ENCODE measurements at regions of chr4 and their contacts with region 1.

Region 1: GRCh38 chr4:139416073-139416673 is 37.7 kb upstream of the RAB33B start:
- DNase-seq: peak; percentile 58
- H3K4me3 ChIP-seq: no peak overlapping the region
- H3K27ac ChIP-seq: no peak overlapping the region
- H3K4me1 ChIP-seq: peaks cover 40% of the 10 kb centered on the region
- H3K27me3 ChIP-seq: no peaks in the 10 kb centered on the region
- CTCF ChIP-seq: peak; percentile 35 to 42
- POLR2A ChIP-seq: no peak

Region 2: DNA sequence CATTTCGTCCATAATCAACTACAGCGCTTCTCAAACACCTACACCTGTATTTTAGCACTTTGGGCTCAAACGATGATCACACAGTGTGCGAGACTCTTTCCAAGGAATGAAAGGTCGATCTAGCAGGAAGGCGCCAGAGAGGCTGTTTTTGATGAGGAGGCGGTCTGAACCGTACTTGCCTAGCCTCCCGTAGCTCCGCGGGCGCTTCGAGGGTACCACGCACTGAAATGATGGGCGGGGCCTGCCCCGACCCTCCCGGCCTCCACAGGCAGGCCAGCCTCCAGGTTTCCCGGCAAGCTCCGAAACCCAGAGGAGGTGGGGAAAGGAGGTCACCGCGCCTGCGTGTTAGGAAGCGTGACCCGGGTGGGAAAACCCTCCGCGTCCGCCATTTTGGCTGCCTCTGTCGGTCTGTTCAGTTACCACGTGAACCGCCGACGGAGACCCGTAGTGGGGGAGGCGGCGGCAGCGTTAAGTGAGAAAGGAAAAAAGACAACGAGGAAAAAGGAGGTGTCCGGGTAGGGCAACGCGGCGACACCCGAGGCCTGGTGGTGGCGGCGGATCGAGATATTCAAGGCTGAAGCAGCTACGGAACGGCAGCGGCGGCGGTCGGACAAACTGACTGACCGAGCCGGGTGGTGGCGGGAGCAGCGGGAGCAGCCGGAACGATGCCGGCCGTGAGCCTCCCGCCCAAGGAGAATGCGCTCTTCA is 114.9 kb before region 1 on chr4 and contains the start of gene NAA15:
- CTCF ChIA-PET with region 1: interaction called, 4 read pairs
- POLR2A ChIA-PET with region 1: no interaction called
- dilution Hi-C with region 1: no loop called
- intact Hi-C with region 1: loop called (anchors 1 kb)
- DNase-seq: peak; percentile 99
- H3K4me3 ChIP-seq: peak within 1 kb of the TSS; percentile 69 to 99 (median 85)
- H3K27ac ChIP-seq: peak within 1 kb of the TSS; percentile 88
- H3K4me1 ChIP-seq: peaks cover 20% of the 10 kb centered on the region
- H3K27me3 ChIP-seq: no peaks in the 10 kb centered on the region
- CTCF ChIP-seq: no peak
- POLR2A ChIP-seq: peak; percentile 28
- total RNA-seq, gene NAA15: 57.0 and 67.9 TPM in 2 replicates

Region 3: DNA sequence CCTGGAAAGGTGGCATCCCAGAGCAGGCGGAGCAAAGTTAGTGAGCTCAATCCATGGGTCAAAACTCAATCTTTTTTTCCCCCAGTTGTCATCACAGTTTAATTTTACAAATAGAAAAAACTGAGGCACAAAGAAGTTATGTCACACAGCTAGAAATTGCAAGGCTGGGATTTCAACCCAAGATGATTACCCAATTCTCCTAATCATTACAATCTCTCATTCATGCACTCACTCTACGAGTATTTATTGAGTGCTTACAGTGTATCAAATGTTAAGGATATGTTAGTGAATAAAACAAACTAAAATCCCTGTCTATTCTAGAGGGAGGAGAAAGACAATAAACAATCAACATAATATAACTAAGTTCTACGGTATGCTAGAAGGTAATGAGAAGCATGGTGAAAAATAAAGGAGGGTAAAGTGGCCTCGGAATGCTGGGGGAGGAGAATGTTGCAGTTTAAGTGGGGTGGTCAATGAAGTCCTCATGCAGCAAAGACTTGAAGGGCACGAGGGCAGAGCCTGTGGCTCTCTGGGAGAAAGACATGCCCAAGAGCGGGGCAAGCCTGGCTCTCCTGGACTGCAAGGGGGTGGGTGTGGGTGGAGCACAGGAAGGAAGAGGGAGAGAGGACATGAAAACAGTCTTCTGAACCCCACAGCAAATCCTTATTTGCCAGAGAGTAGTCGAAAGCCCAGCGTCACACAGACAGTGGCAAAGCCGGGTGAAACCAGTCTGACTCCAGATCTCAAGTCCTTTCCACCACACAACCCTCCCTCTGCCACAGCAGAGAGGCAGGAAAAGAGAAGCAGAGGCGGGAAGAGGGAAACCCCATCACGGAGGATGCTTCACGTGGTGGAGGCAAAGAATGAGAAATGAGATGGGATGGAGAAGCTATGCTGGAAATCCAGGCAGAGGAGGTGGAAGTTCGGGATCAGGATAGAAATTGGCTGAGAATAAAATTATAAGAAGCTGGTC is 86.0 kb after region 1 on chr4:
- CTCF ChIA-PET with region 1: interaction called, 18 read pairs
- POLR2A ChIA-PET with region 1: no interaction called
- dilution Hi-C with region 1: no loop called
- intact Hi-C with region 1: loop called (anchors 2 kb)
- DNase-seq: no peak
- H3K4me3 ChIP-seq: no peak overlapping the region
- H3K27ac ChIP-seq: no peak overlapping the region
- H3K4me1 ChIP-seq: no peaks in the 10 kb centered on the region
- H3K27me3 ChIP-seq: no peaks in the 10 kb centered on the region
- CTCF ChIP-seq: no peak
- POLR2A ChIP-seq: peak; percentile 11

Region 4: GRCh38 chr4:139530833-139531427 is 114.8 kb after region 1 on chr4:
- CTCF ChIA-PET with region 1: interaction called, 12 read pairs
- POLR2A ChIA-PET with region 1: no interaction called
- dilution Hi-C with region 1: no loop called
- intact Hi-C with region 1: loop called (anchors 1 kb)
- DNase-seq: peak; percentile 50
- H3K4me3 ChIP-seq: no peak overlapping the region
- H3K27ac ChIP-seq: no peak overlapping the region
- H3K4me1 ChIP-seq: no peaks in the 10 kb centered on the region
- H3K27me3 ChIP-seq: no peaks in the 10 kb centered on the region
- CTCF ChIP-seq: peak; percentile 68
- POLR2A ChIP-seq: no peak

Region 5: GRCh38 chr4:139564502-139564901 is 148.3 kb after region 1 on chr4:
- CTCF ChIA-PET with region 1: no interaction called
- POLR2A ChIA-PET with region 1: no interaction called
- dilution Hi-C with region 1: no loop called
- intact Hi-C with region 1: no loop called
- DNase-seq: no peak
- H3K4me3 ChIP-seq: no peak overlapping the region
- H3K27ac ChIP-seq: no peak overlapping the region
- H3K4me1 ChIP-seq: peaks cover 4% of the 10 kb centered on the region
- H3K27me3 ChIP-seq: no peaks in the 10 kb centered on the region
- CTCF ChIP-seq: peak in 1 of 2 donors; percentile 12
- POLR2A ChIP-seq: no peak

Region 6: DNA sequence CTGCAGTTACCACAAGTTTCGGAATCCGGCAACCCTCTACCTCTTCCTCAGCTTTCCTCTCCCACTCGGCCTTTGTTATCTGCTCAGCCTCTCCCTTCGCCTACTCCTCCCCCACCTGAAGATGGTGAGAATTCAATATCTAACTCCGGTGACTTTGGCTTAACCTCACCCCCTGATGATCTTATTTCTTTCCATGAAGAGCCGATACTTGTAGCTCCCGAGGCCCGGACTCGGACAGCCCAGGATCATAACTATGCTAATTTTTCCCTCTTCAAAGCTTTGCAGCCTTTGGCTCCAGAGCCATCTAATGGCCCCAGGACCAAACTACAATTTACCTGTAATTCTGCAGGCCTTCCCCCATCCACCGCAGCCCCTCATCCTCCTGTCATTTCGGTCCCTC is 217.5 kb after region 1 on chr4:
- CTCF ChIA-PET with region 1: interaction called, 5 read pairs
- POLR2A ChIA-PET with region 1: no interaction called
- dilution Hi-C with region 1: no loop called
- intact Hi-C with region 1: loop called (anchors 5 kb)
- DNase-seq: peak; percentile 29
- H3K4me3 ChIP-seq: no peak overlapping the region
- H3K27ac ChIP-seq: no peak overlapping the region
- H3K4me1 ChIP-seq: no peaks in the 10 kb centered on the region
- H3K27me3 ChIP-seq: peaks cover 13 to 14% of the 10 kb centered on the region in 2 experiments
- CTCF ChIP-seq: peak; percentile 11 to 40
- POLR2A ChIP-seq: no peak